MCF 10A (cell line): ENCODE measurements at regions of chr1 and their contacts with region 1.

Region 1: DNA sequence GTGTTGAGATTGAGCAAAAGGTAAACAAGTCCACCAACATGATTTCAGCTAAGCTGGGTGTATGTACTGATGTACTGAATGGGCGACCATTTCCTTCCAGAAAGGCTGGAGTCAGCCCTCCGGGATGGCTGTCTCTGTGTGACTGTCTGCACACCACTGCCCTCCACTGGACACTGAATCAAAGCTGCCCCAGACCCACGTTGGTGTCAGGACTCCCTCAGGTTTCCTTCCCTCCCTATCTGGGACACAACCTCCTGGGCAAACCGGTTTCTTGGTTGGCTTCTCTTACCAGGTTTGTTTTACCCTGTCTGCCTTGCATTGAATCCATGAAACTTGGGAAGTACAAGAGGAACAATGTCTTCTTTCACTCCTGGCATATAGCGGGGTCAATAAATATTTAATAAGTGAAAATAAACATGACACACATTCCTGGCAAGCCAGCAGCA is 5.3 kb upstream of the SRP9 start:
- DNase-seq: peak; percentile 97
- H3K4me3 Mint-ChIP-seq: no peak overlapping the region
- H3K27ac Mint-ChIP-seq: no peak overlapping the region
- H3K4me1 Mint-ChIP-seq: peaks cover 19% of the 10 kb centered on the region
- H3K27me3 Mint-ChIP-seq: no peaks in the 10 kb centered on the region
- CTCF ChIP-seq: peak; percentile 100

Region 2: DNA sequence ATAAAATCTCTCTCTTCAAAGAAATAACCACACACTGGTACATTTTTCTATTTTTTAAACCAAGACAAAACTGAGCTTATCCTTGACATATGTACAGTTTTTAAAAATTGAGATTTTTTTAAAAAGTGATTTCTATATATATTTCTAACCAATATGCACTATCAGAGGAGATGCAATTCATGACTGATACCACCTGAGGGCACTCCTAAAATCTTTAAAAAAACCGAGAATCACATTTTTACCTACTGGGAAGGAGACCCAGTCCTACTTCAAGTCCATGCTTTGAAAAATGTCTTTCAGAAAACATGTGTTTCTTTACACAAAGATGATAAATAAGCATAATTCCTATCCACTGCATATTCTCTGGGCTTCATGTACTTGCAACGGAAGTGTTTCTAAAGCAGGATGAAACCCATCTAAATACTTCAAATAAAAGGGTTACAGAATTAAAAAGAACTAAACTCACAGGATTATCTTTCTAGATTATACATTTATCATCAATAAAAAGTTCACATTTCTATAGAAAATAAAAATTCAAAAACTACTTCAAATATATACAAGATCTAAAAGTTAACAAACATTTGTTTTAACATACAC is 218.0 kb before region 1 on chr1:
- CTCF ChIA-PET with region 1: interaction called, 245 read pairs
- POLR2A ChIA-PET with region 1: interaction called, 25 read pairs
- intact Hi-C with region 1: loop called (anchors 1 kb)
- DNase-seq: peak; percentile 67
- H3K4me3 Mint-ChIP-seq: no peak overlapping the region
- H3K27ac Mint-ChIP-seq: no peak overlapping the region
- H3K4me1 Mint-ChIP-seq: peaks cover 2% of the 10 kb centered on the region
- H3K27me3 Mint-ChIP-seq: no peaks in the 10 kb centered on the region
- CTCF ChIP-seq: peak; percentile 85

Region 3: DNA sequence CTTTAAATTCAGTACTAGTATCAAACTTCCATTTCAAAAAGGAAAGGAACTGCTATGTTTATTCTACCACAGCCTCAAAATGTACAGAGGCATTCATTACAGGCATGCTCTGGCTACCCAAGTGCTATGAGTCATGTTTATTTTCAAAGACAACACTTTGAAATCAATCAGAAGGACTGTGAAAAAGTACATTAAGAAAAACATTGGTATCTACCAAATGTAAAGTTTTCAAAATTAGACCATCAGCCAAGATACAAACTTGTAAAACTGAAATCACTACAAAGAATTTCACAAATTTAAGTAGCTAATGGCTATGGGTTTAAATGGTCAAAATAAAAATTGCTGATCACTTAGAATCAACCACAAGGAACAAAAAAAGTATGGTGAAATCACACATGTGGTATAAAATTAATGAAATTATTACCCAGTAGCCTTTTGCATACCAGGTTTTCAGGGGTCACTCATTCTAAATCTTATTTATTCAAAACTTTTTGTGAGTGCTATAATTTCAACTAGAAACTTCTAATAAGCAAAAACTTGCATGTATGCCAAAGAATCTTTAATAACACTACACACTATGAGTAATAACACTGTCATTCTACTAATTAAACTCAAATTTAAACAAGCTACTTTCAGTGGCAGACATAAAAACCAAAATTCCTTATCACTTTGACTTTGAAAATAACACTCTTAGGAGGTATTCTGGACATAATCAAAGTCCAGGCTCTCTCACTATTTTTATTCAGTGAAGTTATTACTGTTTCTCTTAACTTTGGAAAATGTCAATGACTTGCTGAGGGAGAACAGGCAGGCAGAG is 168.6 kb before region 1 on chr1:
- CTCF ChIA-PET with region 1: interaction called, 11 read pairs
- POLR2A ChIA-PET with region 1: interaction called, 31 read pairs
- intact Hi-C with region 1: no loop called
- DNase-seq: peak; percentile 86
- H3K4me3 Mint-ChIP-seq: peak overlapping the region; percentile 68
- H3K27ac Mint-ChIP-seq: peak overlapping the region; percentile 95
- H3K4me1 Mint-ChIP-seq: peaks cover 61% of the 10 kb centered on the region
- H3K27me3 Mint-ChIP-seq: no peaks in the 10 kb centered on the region
- CTCF ChIP-seq: no peak

Region 4: DNA sequence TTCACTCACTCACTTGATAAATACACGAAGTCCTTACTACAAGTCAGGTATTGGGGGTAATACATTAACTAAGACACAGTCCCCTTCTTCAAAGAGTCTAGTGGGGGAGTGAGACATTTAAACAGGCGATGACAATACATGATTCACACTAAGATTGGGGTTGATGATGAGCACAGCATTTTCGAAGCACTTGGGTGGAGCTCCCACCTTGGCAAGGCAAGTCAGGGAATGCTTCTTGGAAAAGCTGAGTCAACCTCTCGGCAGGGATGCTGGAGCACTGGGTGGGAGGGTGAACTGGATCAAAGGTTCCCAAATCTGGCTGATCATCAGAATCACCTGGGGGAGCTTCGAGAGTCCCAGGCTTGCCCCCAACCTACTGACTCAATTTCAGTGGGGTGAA is 61.5 kb before region 1 on chr1:
- CTCF ChIA-PET with region 1: interaction called, 50 read pairs
- POLR2A ChIA-PET with region 1: interaction called, 29 read pairs
- intact Hi-C with region 1: no loop called
- DNase-seq: peak; percentile 97
- H3K4me3 Mint-ChIP-seq: no peak overlapping the region
- H3K27ac Mint-ChIP-seq: peak overlapping the region; percentile 56
- H3K4me1 Mint-ChIP-seq: peaks cover 17% of the 10 kb centered on the region
- H3K27me3 Mint-ChIP-seq: no peaks in the 10 kb centered on the region
- CTCF ChIP-seq: no peak

Region 5: DNA sequence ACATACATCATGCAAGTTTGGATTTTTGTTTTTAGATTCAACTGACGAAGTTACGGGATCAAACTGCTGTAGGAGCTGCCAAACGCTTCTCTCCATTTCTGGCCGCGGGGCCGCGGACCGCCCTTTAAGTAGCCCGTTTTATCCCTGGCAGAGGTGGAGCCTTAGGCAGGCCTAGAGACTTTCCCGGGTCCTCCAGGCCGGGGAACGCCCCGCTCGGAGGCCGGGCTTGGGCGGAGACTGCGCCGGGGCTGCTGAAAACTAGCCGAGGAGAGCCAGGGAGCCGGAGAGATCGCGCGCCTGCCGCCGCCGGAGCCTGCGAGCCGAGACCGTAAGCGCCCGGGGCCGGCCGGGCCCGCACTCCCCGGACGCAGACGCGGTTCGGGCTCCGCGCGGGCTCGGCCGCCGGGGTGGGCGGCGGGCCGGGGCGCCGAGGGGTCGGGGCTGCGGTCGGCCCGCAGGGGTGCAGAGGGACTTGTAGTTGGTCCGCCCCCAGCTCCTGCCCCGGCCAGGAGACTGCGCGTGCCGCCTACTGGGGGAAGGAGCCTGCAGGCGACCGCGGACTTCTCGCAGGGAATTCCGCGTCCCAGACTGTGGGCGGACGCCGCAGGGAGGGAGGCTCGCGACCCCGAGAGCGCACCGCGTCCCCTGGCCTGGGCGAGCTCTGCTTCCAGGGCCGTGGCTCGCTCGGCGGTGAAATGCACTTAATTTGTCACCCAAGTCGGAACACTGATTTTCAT is 37.7 kb after region 1 on chr1 and contains the start of gene EPHX1:
- CTCF ChIA-PET with region 1: interaction called, 75 read pairs
- POLR2A ChIA-PET with region 1: interaction called, 135 read pairs
- intact Hi-C with region 1: no loop called
- DNase-seq: peak; percentile 97
- H3K4me3 Mint-ChIP-seq: peak within 1 kb of the TSS; percentile 92
- H3K27ac Mint-ChIP-seq: peak within 1 kb of the TSS; percentile 82
- H3K4me1 Mint-ChIP-seq: peaks cover 25% of the 10 kb centered on the region
- H3K27me3 Mint-ChIP-seq: no peaks in the 10 kb centered on the region
- CTCF ChIP-seq: peak; percentile 35
- total RNA-seq, gene EPHX1: 25.0 and 35.8 TPM in 2 replicates

Region 6: DNA sequence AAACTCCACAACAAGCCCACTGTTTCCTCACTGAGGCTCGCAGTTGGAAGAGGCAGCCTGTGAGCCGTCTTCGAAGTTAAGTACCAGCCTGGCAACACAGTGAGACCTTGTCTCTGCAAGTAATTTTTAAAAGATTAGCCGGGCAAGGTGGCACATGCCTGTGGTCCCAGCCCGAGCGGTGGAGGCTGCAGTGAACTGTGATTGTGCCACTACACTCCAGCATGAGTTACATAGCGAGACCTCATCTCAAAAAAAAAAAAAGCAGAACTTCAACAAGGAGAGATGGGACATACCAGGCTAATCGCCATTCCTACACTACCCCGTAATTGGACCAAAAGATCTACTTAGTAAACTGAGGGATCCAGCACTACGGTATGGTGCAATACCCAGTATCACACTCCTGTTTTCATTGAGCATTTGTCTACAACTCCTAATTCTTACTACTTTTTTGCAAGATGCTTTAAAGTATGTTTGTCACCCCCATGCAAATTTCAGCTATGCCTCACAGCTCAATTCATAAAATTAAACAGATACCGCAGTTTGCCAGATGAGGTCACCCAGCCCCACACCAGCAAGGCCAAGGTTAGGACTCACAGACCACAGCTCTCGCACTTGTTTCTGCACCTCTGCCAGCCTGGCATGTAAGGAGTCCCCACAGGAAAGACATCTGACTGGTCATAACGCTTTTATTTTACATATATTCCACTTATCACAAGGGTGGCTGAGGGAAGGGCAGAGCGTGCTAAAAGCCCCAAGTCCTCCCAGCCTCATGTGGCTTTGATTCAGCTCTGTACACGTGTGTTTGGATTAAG is 205.8 kb after region 1 on chr1:
- CTCF ChIA-PET with region 1: interaction called, 119 read pairs
- POLR2A ChIA-PET with region 1: interaction called, 38 read pairs
- intact Hi-C with region 1: loop called (anchors 1 kb)
- DNase-seq: no peak
- H3K4me3 Mint-ChIP-seq: no peak overlapping the region
- H3K27ac Mint-ChIP-seq: no peak overlapping the region
- H3K4me1 Mint-ChIP-seq: peaks cover 5% of the 10 kb centered on the region
- H3K27me3 Mint-ChIP-seq: no peaks in the 10 kb centered on the region
- CTCF ChIP-seq: no peak